Activated CD8-positive, alpha-beta T cell treated with anti-CD3 and anti-CD28 coated beads for 36 hours (primary cell): ENCODE measurements at regions of chr11 and their contacts with region 1.

Region 1: GRCh38 chr11:65204646-65205601 is 23.2 kb downstream of the CAPN1 start:
- DNase-seq: peak; percentile 55
- ATAC-seq: peak; percentile 90
- H3K4me3 Mint-ChIP-seq: no peak overlapping the region
- H3K27ac Mint-ChIP-seq: no peak overlapping the region
- H3K4me1 Mint-ChIP-seq: peaks cover 3% of the 10 kb centered on the region
- H3K27me3 Mint-ChIP-seq: no peaks in the 10 kb centered on the region
- CTCF ChIP-seq: peak; percentile 98

Region 2: GRCh38 chr11:65194564-65194963 is 10.4 kb before region 1 on chr11:
- CTCF ChIA-PET with region 1: interaction called, 10 read pairs
- POLR2A ChIA-PET with region 1: no interaction called
- intact Hi-C with region 1: no loop called
- DNase-seq: no peak
- ATAC-seq: no peak
- H3K4me3 Mint-ChIP-seq: no peak overlapping the region
- H3K27ac Mint-ChIP-seq: no peak overlapping the region
- H3K4me1 Mint-ChIP-seq: no peaks in the 10 kb centered on the region
- H3K27me3 Mint-ChIP-seq: no peaks in the 10 kb centered on the region
- CTCF ChIP-seq: no peak

Region 3: GRCh38 chr11:65584106-65584505 is 379.2 kb after region 1 on chr11:
- CTCF ChIA-PET with region 1: no interaction called
- POLR2A ChIA-PET with region 1: no interaction called
- intact Hi-C with region 1: no loop called
- DNase-seq: no peak
- ATAC-seq: no peak
- H3K4me3 Mint-ChIP-seq: no peak overlapping the region
- H3K27ac Mint-ChIP-seq: no peak overlapping the region
- H3K4me1 Mint-ChIP-seq: peaks cover 35% of the 10 kb centered on the region
- H3K27me3 Mint-ChIP-seq: no peaks in the 10 kb centered on the region
- CTCF ChIP-seq: no peak